ENCODE measurements at regions of chr3 and their contacts with region 1.

Region 1: GRCh38 chr3:122679085-122679881 is 1.4 kb upstream of the PARP14 start:
- DNase-seq: peak; percentile 68 to 75
- H3K4me3 ChIP-seq: peak overlapping the region; percentile 88 to 98 (median 96)
- H3K27ac ChIP-seq: peak overlapping the region; percentile 96 to 99
- H3K4me1 ChIP-seq: peaks cover 0 to 8% of the 10 kb centered on the region in 2 donors
- H3K27me3 ChIP-seq: no peaks in the 10 kb centered on the region
- CTCF ChIP-seq: peak; percentile 64 to 82 (median 78)
- POLR2A ChIP-seq: no peak

Region 2: DNA sequence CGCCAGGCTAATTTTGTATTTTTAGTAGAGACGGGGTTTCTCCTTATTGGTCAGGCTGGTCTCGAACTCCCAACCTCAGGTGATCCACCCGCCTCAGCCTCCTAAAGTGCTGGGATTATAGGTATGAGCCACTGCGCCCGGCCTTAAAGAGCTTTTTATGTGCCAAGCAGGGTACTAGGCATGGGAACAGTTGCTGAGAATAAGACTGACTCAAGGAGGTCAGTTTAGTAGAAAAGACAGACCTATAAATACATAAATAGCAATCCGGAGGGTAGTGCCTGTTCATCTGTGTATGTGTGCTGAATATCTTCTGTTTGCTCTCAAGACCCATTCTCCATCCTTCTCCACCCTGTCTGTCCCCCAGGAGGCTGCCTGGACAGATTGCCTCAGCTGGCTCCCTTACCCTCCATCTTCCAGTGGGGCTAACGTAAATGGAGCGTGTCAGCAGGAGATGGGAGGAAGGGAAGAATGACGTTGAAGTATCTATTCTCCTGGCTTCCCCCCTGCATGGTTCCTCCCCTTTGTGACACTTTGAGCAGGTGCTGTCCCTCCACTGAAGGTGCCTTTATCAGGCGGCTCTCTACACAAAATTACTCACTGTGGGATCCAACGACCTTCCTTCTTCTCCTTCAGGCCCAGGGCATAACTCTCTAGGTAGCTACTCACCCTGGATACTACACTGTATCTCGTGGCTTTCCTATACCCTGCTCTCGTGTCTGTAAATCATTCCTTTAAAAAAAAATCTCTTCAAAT is 1055.0 kb before region 1 on chr3:
- intact Hi-C with region 1: loop called (anchors 10 kb)
- DNase-seq: no peak
- H3K4me3 ChIP-seq: no peak overlapping the region
- H3K27ac ChIP-seq: no peak overlapping the region
- H3K4me1 ChIP-seq: no peaks in the 10 kb centered on the region
- H3K27me3 ChIP-seq: no peaks in the 10 kb centered on the region
- CTCF ChIP-seq: no peak
- POLR2A ChIP-seq: no peak

Region 3: DNA sequence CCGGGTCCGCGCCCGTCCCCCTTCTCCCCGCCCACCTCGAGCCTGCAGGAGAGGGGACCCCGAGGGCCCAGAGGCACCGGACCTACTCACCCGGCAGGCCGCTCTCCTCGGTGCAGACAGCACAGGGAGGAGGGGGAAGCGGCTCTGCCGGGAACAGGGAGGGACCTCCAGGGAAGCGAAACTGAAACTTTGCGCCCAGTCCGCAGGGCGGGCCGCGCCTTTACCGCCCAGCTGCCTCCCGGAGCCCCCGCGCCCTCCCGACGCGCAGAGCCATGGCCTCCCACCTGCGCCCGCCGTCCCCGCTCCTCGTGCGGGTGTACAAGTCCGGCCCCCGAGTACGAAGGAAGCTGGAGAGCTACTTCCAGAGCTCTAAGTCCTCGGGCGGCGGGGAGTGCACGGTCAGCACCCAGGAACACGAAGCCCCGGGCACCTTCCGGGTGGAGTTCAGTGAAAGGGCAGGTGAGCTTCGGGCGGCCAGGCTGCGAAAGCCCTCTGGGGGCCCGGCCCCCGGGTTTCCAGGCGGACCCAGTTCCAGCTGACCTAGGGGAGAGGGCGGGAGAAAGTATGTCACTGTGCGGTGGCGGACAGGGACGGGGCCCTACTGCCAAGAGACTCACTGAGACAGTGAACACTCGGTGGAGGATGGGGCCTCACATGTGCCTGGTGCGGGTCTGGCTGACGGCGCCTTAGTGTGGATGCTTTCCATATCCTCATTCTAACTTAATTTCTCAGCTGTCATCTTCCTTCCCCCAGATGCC is 114.9 kb before region 1 on chr3 and contains the starts of genes DTX3L and PARP9:
- intact Hi-C with region 1: loop called (anchors 2 kb)
- DNase-seq: peak; percentile 65 to 75
- H3K4me3 ChIP-seq: peak within 1 kb of the TSS; percentile 71 to 86 (median 77)
- H3K27ac ChIP-seq: peak within 1 kb of the TSS; percentile 93
- H3K4me1 ChIP-seq: peaks cover 0 to 9% of the 10 kb centered on the region in 2 donors
- H3K27me3 ChIP-seq: no peaks in the 10 kb centered on the region
- CTCF ChIP-seq: no peak
- POLR2A ChIP-seq: peak; percentile 55
- total RNA-seq, gene DTX3L: 19.0 to 30.1 (median 29.2) TPM
- total RNA-seq, gene PARP9: 17.4 to 55.1 (median 39.7) TPM

Region 4: DNA sequence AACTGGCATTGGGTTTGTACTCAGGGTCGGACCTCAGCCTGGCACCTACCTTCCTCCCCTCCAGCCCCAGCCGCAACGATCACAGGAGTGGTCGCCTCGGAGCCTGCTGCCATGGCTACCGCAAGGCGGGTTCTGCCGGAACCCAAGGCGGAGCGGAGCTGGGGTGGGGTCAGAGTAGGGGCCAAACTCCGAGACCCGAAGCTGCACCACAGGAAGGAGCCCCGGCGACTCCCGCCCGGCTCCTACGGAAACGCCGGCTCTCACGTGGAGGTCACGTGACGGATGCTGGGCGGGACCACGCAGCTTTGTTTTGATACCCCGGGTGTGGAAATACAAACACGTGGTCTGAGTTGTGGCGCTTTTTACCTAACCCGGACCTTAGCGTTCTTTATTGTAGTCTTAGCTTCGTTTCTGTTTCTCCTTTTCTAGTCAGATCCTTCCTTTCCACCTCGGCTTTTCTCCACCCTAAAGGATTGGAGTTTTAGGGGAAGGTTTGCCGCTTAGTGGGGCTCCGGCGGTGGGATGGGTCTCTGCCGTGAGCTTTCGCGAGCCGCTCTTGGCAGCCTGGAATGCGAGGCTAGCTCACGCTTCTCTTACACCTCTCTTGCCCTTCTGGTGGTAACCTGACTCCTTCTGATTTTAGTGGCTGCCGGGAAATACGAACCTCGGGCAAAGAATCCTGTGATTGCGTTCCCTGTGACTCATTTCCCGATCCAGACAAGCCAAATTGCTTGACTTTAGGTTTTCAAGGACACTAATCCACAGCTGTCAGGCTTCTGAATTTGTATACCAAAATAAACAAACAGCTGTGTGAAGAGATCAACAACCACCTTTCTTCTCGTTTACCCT is 114.5 kb after region 1 on chr3 and contains the start of gene HSPBAP1:
- intact Hi-C with region 1: no loop called
- DNase-seq: peak; percentile 90 to 92
- H3K4me3 ChIP-seq: peak within 1 kb of the TSS; percentile 72 to 73 (median 72)
- H3K27ac ChIP-seq: peak within 1 kb of the TSS; percentile 94 to 97
- H3K4me1 ChIP-seq: no peaks in the 10 kb centered on the region
- H3K27me3 ChIP-seq: no peaks in the 10 kb centered on the region
- CTCF ChIP-seq: no peak
- POLR2A ChIP-seq: no peak
- total RNA-seq, gene HSPBAP1: 11.7 to 18.6 (median 15.7) TPM

Measured in breast epithelium (tissue), 4 donors.